ENCODE measurements at regions of chr12 and their contacts with region 1.

Region 1: DNA sequence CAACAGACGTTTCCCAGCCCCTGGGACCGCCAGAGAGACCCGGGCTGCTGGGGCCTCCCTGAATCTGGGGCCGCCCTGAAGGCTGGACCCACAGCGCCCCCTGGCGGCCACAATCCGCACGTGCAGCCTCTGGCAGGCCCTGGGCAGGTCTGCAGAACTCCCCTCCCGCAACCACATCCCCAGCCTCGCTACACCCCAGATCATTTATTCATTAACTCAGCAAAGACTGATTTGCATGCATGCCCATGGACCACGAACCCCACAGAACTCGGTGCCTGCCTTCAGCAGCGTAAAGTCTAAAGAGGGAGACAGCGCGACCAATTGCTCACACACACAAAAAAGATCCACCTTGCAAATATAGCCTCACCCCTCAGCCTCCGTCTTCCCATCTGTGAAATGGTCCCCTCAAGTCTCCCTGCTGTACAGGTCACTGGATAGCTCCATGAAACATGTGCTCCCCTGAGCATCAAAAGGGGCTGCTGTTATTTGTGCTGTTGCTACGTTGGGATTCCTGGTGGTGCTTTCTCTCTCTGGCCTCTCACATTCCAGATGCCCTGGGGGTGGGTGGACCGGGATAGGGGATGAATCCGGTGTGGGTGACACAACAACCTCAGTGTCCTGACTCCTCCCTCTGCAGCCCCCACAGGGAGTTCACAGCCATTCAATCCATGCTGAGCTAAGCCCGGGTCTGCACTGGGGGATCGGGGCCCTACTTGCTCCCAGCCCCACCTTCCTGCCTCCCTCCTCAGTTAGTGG is 96.4 kb downstream of the SCARB1 start:
- DNase-seq: peak; percentile 91
- ATAC-seq: peak; percentile 68

Region 2: GRCh38 chr12:124036674-124037109 is 730.6 kb before region 1 on chr12:
- intact Hi-C with region 1: loop called (anchors 5 kb)
- DNase-seq: peak; percentile 76
- ATAC-seq: peak; percentile 58

Region 3: GRCh38 chr12:124053851-124054250 is 713.4 kb before region 1 on chr12:
- intact Hi-C with region 1: loop called (anchors 5 kb)
- DNase-seq: peak; percentile 79
- ATAC-seq: peak; percentile 96

Region 4: DNA sequence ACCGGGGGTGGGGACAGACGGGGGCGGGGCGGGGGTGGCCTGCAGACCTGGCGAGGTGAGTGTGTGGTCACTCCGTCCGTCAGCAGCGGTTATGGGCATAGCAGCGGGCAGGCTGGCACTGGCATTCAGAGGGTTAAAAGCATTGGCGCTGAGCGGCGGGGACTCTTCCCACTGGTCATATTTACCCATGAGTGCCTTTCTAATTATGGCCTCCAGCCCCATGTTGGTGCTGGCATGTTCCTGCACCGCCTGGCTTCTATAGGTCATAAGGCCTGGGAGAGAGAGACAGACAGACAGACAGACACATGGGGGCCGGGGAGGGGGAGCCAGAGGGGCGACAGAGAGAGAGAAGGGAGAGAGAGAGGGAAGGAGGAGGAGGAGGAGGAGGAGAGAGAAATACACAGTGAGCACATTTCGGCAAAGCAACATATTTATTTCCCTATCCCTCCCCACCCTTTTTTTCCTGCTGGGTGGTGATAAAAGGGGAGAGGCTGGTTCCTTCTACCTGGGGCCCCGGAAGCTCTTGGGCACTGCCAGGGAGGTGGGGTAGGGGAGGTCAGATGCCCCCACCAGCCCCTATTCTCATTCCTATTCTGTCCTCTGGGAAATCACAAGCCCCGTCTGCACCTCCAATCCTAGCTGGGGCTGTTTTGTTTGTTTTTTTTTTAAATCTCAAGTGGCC is 439.7 kb before region 1 on chr12:
- intact Hi-C with region 1: loop called (anchors 5 kb)
- DNase-seq: no peak
- ATAC-seq: peak; percentile 9

Region 5: GRCh38 chr12:124567661-124568373 is 199.4 kb before region 1 on chr12:
- intact Hi-C with region 1: loop called (anchors 5 kb)
- DNase-seq: peak; percentile 98
- ATAC-seq: peak; percentile 88

Measured in sciatic nerve (tissue), 2 donors.